ENCODE measurements at regions of chr18 and their contacts with region 1.

Region 1: DNA sequence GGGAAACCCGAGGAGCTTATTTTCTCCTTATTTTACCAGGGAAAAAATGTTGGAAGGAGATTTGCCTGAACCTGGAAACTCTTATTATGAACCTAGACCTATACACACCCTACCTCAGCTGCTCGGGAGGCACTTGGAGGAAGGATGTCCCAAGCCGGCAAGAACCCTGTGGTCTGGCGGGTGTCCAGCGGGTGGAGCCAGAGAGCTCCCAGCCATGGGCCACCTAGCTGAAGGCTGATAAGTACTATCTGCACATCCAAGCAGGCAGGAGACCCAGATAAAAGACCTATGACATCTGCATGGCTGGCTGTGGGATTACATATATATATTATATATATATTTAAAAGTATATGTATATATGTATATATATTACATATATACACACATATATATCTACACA is 1.1 kb upstream of the SLC14A1 start:
- DNase-seq: peak; percentile 90

Region 2: GRCh38 chr18:45839414-45840395 is 116.8 kb after region 1 on chr18:
- intact Hi-C with region 1: loop called in 1 of 2 experiments (anchors 10 kb)
- DNase-seq: peak; percentile 66

Measured in posterior vena cava (tissue), 2 donors.